Activated naive CD4-positive, alpha-beta T cell treated with anti-CD3 and anti-CD28 coated beads for 36 hours (primary cell): ENCODE measurements at regions of chr16 and their contacts with region 1.

Region 1: DNA sequence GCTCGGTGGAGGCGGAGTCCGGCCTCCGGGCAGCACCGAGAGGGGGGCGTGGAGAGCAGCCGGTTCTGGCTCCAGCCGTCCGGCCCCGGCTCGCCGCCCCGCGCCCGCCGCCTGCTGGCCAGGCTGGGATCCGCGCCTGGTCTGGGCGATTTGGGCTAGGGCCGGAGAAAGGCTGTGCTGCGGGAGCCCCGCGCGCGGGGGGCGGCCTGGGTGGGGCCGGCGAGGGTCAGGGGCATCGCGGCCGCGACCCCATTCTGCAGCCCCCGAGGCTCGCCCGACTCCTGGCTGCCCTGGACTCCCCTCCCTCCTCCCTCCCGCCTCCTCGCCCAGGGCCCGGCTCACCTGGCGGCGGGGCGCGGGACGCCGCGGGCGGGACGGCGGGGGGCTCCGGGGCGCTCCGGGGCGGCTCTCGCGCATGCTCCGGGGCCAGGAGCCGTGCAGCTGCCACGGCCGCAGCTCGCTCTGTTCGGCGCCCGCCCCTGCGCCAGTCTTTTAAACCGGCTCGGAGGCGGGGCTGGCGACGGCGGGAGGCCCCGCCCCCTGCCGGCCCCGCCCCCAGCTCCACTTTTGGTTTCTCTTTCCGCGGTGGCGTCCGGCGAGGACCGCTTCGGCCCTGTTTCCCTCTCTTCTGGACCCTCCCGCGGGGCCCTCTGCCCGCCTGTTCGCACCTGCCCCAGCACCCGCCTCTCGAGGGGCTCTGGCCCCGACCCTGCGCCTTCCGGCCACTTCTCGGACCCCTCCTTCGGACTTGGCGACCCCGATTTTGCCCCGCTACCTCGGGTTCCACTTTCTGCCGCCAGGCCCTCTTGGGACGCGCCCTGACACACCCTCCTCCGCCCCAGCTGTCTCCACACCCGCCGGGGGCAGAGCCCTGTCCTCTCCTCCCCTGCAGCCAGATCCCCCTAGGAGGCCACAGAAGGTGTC is at the start of gene SOCS1:
- DNase-seq: peak; percentile 85
- H3K4me3 Mint-ChIP-seq: peak within 1 kb of the TSS; percentile 95
- H3K27ac Mint-ChIP-seq: peak within 1 kb of the TSS; percentile 99
- H3K4me1 Mint-ChIP-seq: peaks cover 36% of the 10 kb centered on the region
- H3K27me3 Mint-ChIP-seq: no peaks in the 10 kb centered on the region
- total RNA-seq, gene SOCS1: 45.1 to 45.6 TPM

Region 2: DNA sequence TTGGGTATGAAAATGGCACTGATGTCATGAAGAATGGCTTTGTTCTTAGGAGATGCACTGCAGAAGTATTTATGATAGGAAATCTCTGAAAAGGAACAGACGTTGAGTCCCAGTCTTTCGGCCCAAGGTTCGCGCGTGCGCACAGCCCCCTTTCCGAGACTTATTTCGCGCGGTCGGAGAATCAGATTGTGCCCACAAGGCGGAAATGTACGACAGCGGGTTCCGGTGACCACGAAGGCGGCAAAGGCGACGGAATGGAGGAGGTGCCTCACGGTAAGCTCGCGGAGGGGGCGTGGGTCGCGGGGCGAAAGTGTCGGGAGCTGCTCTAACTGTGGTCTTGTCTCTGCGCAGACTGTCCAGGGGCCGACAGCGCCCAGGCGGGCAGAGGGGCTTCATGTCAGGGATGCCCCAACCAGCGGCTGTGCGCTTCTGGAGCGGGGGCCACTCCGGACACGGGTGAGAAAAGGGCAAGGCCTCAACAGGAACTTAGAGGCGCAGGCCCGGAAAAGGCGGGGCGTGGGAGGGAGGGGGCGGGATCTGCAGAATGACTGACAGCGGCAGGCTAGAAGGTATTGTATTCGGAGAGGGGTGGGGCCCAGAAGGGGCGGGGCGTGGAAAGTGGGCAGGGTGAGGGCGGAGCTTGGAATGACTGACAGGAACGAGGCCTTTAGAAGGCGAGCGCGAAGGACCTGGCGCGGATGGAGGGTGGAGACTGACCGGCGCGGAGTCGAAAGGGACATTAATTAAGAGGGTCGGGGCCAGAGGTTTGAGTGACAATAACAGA is 512.2 kb before region 1 on chr16 and contains the start of gene NUBP1:
- CTCF ChIA-PET with region 1: no interaction called
- intact Hi-C with region 1: loop called (anchors 10 kb)
- DNase-seq: peak; percentile 100
- H3K4me3 Mint-ChIP-seq: peak within 1 kb of the TSS; percentile 90
- H3K27ac Mint-ChIP-seq: peak within 1 kb of the TSS; percentile 100
- H3K4me1 Mint-ChIP-seq: peaks cover 26% of the 10 kb centered on the region
- H3K27me3 Mint-ChIP-seq: no peaks in the 10 kb centered on the region
- total RNA-seq, gene NUBP1: 22.3 to 23.0 TPM

Region 3: GRCh38 chr16:10918294-10919002 is 337.6 kb before region 1 on chr16:
- CTCF ChIA-PET with region 1: no interaction called
- intact Hi-C with region 1: no loop called
- DNase-seq: peak; percentile 94
- H3K4me3 Mint-ChIP-seq: no peak overlapping the region
- H3K27ac Mint-ChIP-seq: no peak overlapping the region
- H3K4me1 Mint-ChIP-seq: peaks cover 11% of the 10 kb centered on the region
- H3K27me3 Mint-ChIP-seq: no peaks in the 10 kb centered on the region

Region 4: DNA sequence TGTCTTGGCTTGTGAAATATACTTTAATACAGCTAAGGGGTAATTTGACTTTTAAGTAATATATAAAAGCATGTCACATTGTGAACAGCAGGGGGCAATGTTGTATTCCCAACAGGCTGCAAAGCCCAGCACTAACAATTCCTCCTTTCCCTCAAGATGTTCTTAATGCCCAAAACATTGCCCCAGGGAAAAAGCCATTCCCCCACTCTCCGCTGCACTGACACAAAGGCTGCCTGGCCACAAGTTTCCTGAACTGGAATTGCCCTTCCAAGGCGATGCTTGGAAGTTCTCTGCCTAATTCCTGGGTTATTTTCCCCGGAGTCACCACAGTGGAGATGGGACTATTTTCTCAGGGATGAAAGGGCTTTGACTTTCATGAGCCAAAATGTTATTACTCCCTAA is 284.4 kb before region 1 on chr16:
- CTCF ChIA-PET with region 1: interaction called, 67 read pairs
- intact Hi-C with region 1: loop called (anchors 1 kb)
- DNase-seq: peak; percentile 62
- H3K4me3 Mint-ChIP-seq: no peak overlapping the region
- H3K27ac Mint-ChIP-seq: no peak overlapping the region
- H3K4me1 Mint-ChIP-seq: peaks cover 22% of the 10 kb centered on the region
- H3K27me3 Mint-ChIP-seq: no peaks in the 10 kb centered on the region

Region 5: GRCh38 chr16:11079652-11080187 is 176.3 kb before region 1 on chr16:
- CTCF ChIA-PET with region 1: interaction called, 3 read pairs
- intact Hi-C with region 1: loop called (anchors 1 kb)
- DNase-seq: peak; percentile 74
- H3K4me3 Mint-ChIP-seq: peak overlapping the region; percentile 36
- H3K27ac Mint-ChIP-seq: peak overlapping the region; percentile 96
- H3K4me1 Mint-ChIP-seq: peaks cover 61% of the 10 kb centered on the region
- H3K27me3 Mint-ChIP-seq: no peaks in the 10 kb centered on the region

Region 6: DNA sequence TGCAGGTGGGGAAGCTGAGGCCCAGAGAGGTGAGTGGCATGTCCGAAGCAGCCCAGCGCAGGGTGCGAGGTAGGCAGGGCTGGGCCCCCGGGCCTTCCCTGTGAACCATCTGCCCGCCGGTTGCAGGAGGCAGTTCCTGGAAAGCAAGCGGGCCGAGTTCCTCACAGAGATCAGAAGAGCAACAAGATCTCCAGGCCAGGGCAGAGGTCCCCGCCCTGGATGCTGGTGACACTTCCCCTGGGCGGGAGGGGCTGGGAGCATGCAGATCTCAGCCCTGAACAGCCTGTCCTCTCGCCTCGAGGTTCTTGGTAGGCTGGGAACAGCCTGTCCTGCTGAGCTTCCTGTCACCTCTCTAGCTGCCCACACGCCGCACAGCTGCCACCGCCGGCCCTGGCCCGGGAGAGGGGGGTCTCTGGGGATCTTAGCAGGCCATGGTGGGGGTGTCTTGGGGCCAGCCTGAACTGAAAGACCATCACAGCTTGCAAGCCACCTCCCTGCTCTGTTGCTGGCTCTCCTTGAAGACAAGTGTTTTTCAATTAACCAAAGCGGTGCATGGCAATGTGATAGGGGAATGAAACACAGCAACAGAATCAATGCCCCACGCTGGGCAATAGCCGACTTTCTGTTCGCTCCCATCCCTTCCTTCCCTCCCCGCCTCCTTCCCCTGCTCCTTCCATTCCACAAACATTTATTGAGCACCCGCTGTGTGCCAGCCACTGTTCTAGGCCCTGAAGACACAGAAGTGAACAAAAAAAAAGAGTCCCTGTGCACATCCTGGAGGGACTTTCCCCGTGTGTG is 31.7 kb before region 1 on chr16:
- CTCF ChIA-PET with region 1: interaction called, 32 read pairs
- intact Hi-C with region 1: loop called (anchors 1 kb)
- DNase-seq: peak; percentile 86
- H3K4me3 Mint-ChIP-seq: peak overlapping the region; percentile 35
- H3K27ac Mint-ChIP-seq: peak overlapping the region; percentile 96
- H3K4me1 Mint-ChIP-seq: peaks cover 51% of the 10 kb centered on the region
- H3K27me3 Mint-ChIP-seq: no peaks in the 10 kb centered on the region

Region 7: GRCh38 chr16:11297492-11298142 is 41.6 kb after region 1 on chr16:
- CTCF ChIA-PET with region 1: interaction called, 8 read pairs
- intact Hi-C with region 1: loop called (anchors 1 kb)
- DNase-seq: peak; percentile 78
- H3K4me3 Mint-ChIP-seq: peak overlapping the region; percentile 49
- H3K27ac Mint-ChIP-seq: peak overlapping the region; percentile 0
- H3K4me1 Mint-ChIP-seq: peaks cover 27% of the 10 kb centered on the region
- H3K27me3 Mint-ChIP-seq: no peaks in the 10 kb centered on the region

Region 8: GRCh38 chr16:11356573-11357331 is 100.8 kb after region 1 on chr16:
- CTCF ChIA-PET with region 1: interaction called, 9 read pairs
- intact Hi-C with region 1: loop called (anchors 1 kb)
- DNase-seq: peak; percentile 78
- H3K4me3 Mint-ChIP-seq: no peak overlapping the region
- H3K27ac Mint-ChIP-seq: peak overlapping the region; percentile 28
- H3K4me1 Mint-ChIP-seq: peaks cover 63% of the 10 kb centered on the region
- H3K27me3 Mint-ChIP-seq: no peaks in the 10 kb centered on the region

Region 9: GRCh38 chr16:11379420-11379819 is 123.4 kb after region 1 on chr16:
- CTCF ChIA-PET with region 1: no interaction called
- intact Hi-C with region 1: no loop called
- DNase-seq: peak; percentile 63
- H3K4me3 Mint-ChIP-seq: no peak overlapping the region
- H3K27ac Mint-ChIP-seq: peak overlapping the region; percentile 10
- H3K4me1 Mint-ChIP-seq: peaks cover 13% of the 10 kb centered on the region
- H3K27me3 Mint-ChIP-seq: no peaks in the 10 kb centered on the region

Region 10: DNA sequence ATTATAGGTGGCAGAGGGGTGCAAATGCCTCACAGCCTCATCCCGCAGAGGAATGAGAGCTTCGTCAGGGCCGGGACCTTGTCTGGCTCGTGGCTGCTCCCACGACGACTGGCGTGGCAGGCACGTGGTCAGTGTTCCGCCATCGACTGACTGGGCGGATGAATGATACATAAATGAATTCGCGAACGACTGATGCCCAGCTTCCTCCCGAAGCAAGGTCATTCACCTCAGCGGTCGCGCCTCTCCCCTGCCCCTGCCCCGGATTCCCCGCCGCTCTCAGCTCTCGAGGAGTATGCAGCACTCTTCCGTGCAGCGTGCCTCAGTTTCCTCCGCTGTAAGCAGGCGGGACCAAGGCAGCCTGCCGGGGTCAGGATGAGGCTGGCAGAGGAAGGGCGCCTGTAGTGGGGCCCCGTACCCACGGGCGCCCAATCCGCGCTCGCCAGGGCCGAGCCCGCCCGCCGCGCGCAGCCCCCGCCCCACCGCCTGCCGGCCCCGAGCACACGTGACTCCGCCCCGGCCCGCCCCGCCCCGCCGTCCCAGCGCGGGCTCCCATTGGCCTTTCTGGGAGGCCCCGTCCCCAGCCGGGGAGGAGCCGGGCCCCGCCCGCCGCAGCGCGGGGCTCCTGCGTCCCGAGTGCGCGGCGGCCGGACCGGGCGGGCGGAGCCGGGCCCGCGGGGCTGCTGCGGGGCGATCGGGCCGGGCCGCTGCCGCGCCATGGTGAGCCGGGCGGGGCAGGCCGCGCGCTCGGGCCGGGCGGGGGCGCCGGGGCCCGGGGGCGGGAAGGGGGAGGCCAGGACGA is 412.0 kb after region 1 on chr16 and contains the start of gene SNN:
- CTCF ChIA-PET with region 1: no interaction called
- intact Hi-C with region 1: no loop called
- DNase-seq: peak; percentile 89
- H3K4me3 Mint-ChIP-seq: peak within 1 kb of the TSS; percentile 72
- H3K27ac Mint-ChIP-seq: no peak within 1 kb of the TSS
- H3K4me1 Mint-ChIP-seq: peaks cover 71% of the 10 kb centered on the region
- H3K27me3 Mint-ChIP-seq: no peaks in the 10 kb centered on the region
- total RNA-seq, gene SNN: 12.0 to 13.6 TPM